Pancreas (tissue), 10 donors: ENCODE measurements at regions of chr3 and their contacts with region 1.

Region 1: DNA sequence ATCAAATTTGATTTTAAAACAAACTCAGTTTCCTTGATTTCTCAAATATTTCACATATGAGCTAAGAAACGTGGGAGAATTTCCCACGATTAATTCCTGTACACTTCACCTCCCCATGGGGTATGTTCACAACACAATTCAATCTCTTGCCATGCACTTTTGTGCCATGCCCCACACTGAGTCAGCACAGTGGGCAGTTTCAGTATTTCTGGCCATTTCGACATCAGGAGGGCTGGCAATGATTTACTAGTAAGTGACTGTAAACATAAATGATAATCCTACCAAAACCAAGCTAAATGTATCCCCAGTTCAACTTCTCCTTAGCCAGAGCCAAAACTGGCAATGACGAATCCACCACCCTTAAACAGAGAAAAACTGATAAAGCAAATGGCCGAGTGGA is 293.6 kb downstream of the FGF12 start:
- DNase-seq: peak in 4 of 6 donors; percentile 34 to 53 (median 42)
- ATAC-seq: peak; percentile 90 to 94 (median 92)
- H3K4me3 ChIP-seq: no peak overlapping the region
- H3K27ac ChIP-seq: peak overlapping the region in 2 of 4 donors; percentile 44 to 46
- H3K4me1 ChIP-seq: peaks cover 0 to 16% (median 8%) of the 10 kb centered on the region in 3 donors
- H3K27me3 ChIP-seq: no peaks in the 10 kb centered on the region
- CTCF ChIP-seq: no peak

Region 2: DNA sequence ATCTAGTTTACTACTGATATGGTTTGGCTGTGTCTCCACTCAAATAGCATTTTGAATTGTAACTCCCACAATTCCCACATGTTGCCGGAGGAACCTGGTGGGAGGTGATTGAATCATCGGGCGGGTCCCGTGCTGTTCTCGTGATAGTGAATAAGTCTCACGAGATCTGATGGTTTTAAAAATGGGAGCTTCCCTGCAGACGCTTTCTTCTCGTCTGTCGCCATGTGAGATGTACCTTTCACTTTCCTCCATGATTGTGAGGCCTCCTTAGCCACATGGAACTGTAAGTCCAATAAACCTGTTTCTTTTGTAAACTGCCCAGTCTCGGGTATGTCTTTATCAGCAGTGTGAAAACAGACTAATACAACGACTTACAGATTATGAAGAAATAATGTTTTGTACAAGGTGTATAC is 1008.4 kb before region 1 on chr3:
- intact Hi-C with region 1: loop called in 1 of 3 experiments (anchors 10 kb)
- DNase-seq: no peak
- ATAC-seq: no peak
- H3K4me3 ChIP-seq: no peak overlapping the region
- H3K27ac ChIP-seq: no peak overlapping the region
- H3K4me1 ChIP-seq: peaks cover 0 to 2% (median 0%) of the 10 kb centered on the region in 3 donors
- H3K27me3 ChIP-seq: peaks cover 0 to 5% (median 0%) of the 10 kb centered on the region in 4 donors
- CTCF ChIP-seq: no peak

Region 3: DNA sequence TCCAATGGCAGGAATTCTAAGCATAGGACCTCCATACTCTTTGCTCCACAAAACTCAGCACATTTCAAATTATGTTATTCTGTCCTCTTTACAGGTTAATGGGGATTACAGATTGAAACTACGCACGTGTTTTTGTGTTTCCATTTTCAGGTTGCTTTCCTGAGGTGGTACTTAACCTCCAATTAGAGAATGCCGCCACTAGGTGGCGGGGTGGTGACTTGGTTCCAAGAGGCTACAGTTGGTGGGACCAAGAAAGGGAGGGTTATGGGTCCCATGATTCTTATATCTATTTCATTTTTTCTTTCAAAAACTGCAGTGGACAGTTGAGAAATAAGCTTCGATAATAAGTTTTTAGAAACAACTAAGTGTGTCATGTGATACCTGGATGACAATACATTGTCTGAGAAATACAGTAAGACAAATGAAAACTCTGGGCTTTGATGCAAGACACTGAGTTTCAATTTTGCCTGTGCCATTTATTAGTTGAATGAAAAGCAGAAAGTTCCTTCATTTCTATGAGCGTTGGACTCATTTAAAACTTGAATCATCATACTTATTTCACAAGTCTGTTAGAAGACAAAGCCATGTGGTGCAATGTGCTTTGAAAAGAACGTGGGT is 245.4 kb before region 1 on chr3:
- intact Hi-C with region 1: loop called in 1 of 3 experiments (anchors 10 kb)
- DNase-seq: peak in 5 of 6 donors; percentile 21 to 82 (median 60)
- ATAC-seq: peak; percentile 68 to 89 (median 86)
- H3K4me3 ChIP-seq: no peak overlapping the region
- H3K27ac ChIP-seq: no peak overlapping the region
- H3K4me1 ChIP-seq: no peaks in the 10 kb centered on the region
- H3K27me3 ChIP-seq: no peaks in the 10 kb centered on the region
- CTCF ChIP-seq: peak; percentile 29 to 57 (median 56)